B cell (primary cell): ENCODE measurements at regions of chr9 and their contacts with region 1.

Region 1: DNA sequence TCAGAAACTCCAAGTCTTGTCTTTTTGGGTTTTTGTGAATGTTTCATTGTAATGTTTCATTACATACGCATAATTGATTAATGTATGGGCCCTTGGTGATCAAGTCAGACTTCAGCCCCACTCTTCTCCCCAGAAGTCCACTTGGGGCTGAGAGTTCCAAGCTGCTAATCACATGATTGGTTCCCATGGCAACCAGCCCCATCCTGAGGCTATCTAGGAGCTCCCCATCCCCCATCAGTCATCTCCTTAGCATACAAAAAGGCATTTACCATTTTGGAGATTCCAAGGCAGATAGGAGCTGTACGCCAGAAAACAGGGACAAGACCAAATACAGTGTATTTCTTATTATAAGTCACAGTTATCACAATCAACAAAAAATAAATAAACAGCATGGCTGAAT is 22.9 kb upstream of the SYK start:
- DNase-seq: no peak
- ATAC-seq: no peak
- H3K4me3 ChIP-seq: no peak overlapping the region
- H3K4me3 Mint-ChIP-seq: no peak overlapping the region
- H3K27ac ChIP-seq: no peak overlapping the region
- H3K27ac Mint-ChIP-seq: no peak overlapping the region
- H3K4me1 ChIP-seq: peaks cover 25 to 29% of the 10 kb centered on the region in 2 donors
- H3K4me1 Mint-ChIP-seq: peaks cover 40% of the 10 kb centered on the region
- H3K27me3 ChIP-seq: no peaks in the 10 kb centered on the region
- H3K27me3 Mint-ChIP-seq: no peaks in the 10 kb centered on the region
- CTCF ChIP-seq: no peak

Region 2: GRCh38 chr9:90870621-90871326 is 92.0 kb after region 1 on chr9:
- CTCF ChIA-PET with region 1: interaction called, 26 read pairs
- POLR2A ChIA-PET with region 1: no interaction called
- intact Hi-C with region 1: loop called (anchors 1 kb)
- DNase-seq: peak; percentile 70
- ATAC-seq: peak; percentile 39
- H3K4me3 ChIP-seq: no peak overlapping the region
- H3K4me3 Mint-ChIP-seq: no peak overlapping the region
- H3K27ac ChIP-seq: peak overlapping the region in 1 of 2 donors; percentile 44
- H3K27ac Mint-ChIP-seq: no peak overlapping the region
- H3K4me1 ChIP-seq: no peaks in the 10 kb centered on the region
- H3K4me1 Mint-ChIP-seq: peaks cover 1% of the 10 kb centered on the region
- H3K27me3 ChIP-seq: no peaks in the 10 kb centered on the region
- H3K27me3 Mint-ChIP-seq: no peaks in the 10 kb centered on the region
- CTCF ChIP-seq: peak; percentile 99

Region 3: GRCh38 chr9:90964101-90965020 is 185.6 kb after region 1 on chr9:
- CTCF ChIA-PET with region 1: no interaction called
- POLR2A ChIA-PET with region 1: no interaction called
- intact Hi-C with region 1: no loop called
- DNase-seq: peak; percentile 38
- ATAC-seq: peak; percentile 80
- H3K4me3 ChIP-seq: peak overlapping the region in 3 of 5 experiments; percentile 3 to 43 (median 33)
- H3K4me3 Mint-ChIP-seq: peak overlapping the region; percentile 81
- H3K27ac ChIP-seq: no peak overlapping the region
- H3K27ac Mint-ChIP-seq: no peak overlapping the region
- H3K4me1 ChIP-seq: peaks cover 10 to 11% of the 10 kb centered on the region in 2 donors
- H3K4me1 Mint-ChIP-seq: peaks cover 11% of the 10 kb centered on the region
- H3K27me3 ChIP-seq: peaks cover 0 to 9% (median 0%) of the 10 kb centered on the region in 4 experiments
- H3K27me3 Mint-ChIP-seq: peaks cover 47% of the 10 kb centered on the region
- CTCF ChIP-seq: no peak

Region 4: GRCh38 chr9:91177661-91178280 is 399.0 kb after region 1 on chr9:
- CTCF ChIA-PET with region 1: no interaction called
- POLR2A ChIA-PET with region 1: no interaction called
- intact Hi-C with region 1: no loop called
- DNase-seq: peak; percentile 31
- ATAC-seq: no peak
- H3K4me3 ChIP-seq: no peak overlapping the region
- H3K4me3 Mint-ChIP-seq: peak overlapping the region; percentile 26
- H3K27ac ChIP-seq: no peak overlapping the region
- H3K27ac Mint-ChIP-seq: no peak overlapping the region
- H3K4me1 ChIP-seq: peaks cover 29 to 35% of the 10 kb centered on the region in 2 donors
- H3K4me1 Mint-ChIP-seq: peaks cover 33% of the 10 kb centered on the region
- H3K27me3 ChIP-seq: no peaks in the 10 kb centered on the region
- H3K27me3 Mint-ChIP-seq: no peaks in the 10 kb centered on the region
- CTCF ChIP-seq: no peak